K562 (cell line): ENCODE measurements at regions of chr12 and their contacts with region 1.

Region 1: DNA sequence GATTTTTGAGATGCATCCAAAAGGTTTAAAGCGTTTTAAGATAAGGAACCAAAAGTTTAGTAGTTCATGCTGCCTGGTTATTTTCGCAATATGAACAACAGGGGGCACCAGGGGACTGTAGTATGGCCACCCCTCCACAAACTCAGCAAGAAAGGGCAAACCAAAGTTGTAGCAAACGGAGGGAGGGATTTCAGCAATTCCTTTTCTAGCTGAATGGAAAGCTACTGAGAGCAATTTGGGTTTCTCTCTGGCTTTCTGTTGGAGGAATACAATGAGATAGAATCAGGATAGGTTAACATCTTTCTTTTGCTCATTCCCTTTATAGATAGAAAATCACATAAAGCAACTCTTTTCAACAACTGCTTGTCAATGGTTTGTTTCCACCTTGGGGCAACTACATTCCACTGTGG is 62.5 kb downstream of the DRAM1 start:
- DNase-seq: peak; percentile 66 to 79 (median 67)
- ATAC-seq: peak; percentile 89
- H3K4me3 ChIP-seq: no peak overlapping the region
- H3K27ac ChIP-seq: no peak overlapping the region
- H3K4me1 ChIP-seq: no peaks in the 10 kb centered on the region; a peak in 2 of 5 replicates
- H3K27me3 ChIP-seq: peaks cover 11 to 14% of the 10 kb centered on the region in 2 experiments
- CTCF ChIP-seq: peak; percentile 72 to 91 (median 76)
- EP300 ChIP-seq: no peak
- POLR2A ChIP-seq: no peak
- RAD21 ChIP-seq: peak; percentile 93 to 95

Region 2: DNA sequence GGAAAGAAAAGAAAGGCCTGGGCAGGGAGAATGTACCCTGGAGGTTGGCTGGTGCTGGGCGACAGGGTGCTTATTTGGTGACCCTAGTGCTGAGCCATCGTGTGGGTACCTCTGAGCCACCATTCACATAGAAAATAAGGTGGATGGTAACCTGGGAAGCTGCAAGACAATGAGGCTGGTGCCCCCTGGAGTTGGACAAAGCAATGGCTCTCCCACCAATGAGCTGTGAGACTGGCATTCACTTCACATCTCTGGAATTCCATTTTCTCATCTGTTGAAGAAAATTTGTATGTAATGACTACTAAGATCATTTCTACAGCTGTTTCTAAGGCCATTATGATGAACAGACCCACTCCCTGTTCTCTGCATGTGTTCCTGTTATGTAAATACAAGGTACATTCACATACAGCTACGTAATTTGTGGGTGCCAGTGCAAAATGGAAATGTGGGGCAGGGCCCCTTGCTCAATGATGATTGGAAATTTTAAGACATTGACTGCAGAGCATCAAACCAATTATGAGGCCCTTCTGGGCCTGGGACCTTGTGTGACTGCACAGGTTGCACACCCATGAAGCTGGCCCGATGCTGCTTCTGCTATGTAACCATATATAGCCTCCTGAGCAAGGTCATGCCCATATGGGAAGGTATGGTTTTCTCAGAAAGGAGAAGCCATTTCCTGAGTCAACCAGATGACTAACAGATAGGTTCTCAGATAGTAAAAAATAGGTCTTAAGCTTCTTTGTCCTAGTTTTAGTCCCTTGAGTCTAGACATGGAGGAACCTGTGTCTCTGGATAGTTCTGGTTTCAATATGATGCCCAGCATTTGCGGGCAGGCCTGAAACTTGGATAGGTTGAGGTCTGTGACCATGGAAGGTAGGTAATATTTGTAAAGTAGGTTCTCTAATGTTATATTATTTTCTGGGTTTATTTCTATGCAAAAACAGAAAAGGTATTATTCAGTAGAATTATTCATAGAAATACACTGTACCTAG is 603.9 kb after region 1 on chr12:
- CTCF ChIA-PET with region 1: no interaction called
- POLR2A ChIA-PET with region 1: no interaction called
- in situ Hi-C with region 1: no loop called
- intact Hi-C with region 1: loop called (anchors 5 kb)
- DNase-seq: peak in 1 of 4 experiments; percentile 12
- ATAC-seq: peak; percentile 71; the same call in 2 of the 3 replicates
- H3K4me3 ChIP-seq: no peak overlapping the region
- H3K27ac ChIP-seq: no peak overlapping the region
- H3K4me1 ChIP-seq: no peaks in the 10 kb centered on the region; a peak in 2 of 5 replicates
- H3K27me3 ChIP-seq: no peaks in the 10 kb centered on the region
- CTCF ChIP-seq: peak; percentile 28 to 50 (median 49); a peak in 5 of 6 replicates
- EP300 ChIP-seq: no peak
- POLR2A ChIP-seq: no peak
- RAD21 ChIP-seq: peak in 1 of 2 experiments; percentile 52; a peak in 2 of 4 replicates

Region 3: DNA sequence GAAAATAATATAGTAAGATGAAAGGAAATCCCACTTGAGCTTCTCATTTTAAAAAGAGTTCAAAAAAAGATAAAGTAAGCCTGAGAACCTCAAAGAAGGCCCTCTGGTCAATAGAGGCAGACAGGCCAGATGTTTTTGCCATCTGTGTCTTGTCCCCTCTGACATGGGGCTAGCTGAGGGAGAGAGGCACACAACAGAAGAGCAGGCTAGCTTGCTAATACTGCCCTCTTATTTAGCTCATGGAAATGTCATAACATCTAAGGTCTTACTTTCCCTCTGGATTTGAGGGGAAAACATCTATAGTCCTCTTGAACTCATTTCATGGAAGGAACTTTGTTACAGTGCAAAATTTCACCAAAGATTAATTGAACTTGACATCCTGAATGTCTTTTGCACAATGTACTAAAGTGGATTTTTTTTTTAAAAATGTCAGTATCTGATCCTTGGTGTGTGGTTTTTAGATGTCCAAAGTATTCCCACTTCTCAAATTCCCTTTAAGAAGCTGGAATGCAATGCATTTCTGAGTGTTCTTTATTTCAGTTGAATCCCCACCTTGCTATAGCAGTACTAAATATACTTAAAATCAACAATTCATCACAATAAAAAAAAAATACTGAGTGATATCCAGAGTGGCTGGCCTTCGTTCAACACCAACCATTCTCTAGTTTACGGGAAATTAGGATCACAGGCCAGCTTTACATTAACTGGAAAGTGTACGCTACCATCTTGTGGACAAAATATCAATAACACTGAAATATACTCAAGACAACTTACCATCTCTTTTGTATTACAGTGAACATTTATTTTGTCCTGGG is 800.5 kb after region 1 on chr12:
- CTCF ChIA-PET with region 1: interaction called, 10 read pairs
- POLR2A ChIA-PET with region 1: no interaction called
- in situ Hi-C with region 1: no loop called
- intact Hi-C with region 1: no loop called
- DNase-seq: peak in 1 of 4 experiments; percentile 8
- ATAC-seq: peak; percentile 49; the same call in 1 of the 3 replicates
- H3K4me3 ChIP-seq: no peak overlapping the region
- H3K27ac ChIP-seq: no peak overlapping the region
- H3K4me1 ChIP-seq: no peaks in the 10 kb centered on the region
- H3K27me3 ChIP-seq: no peaks in the 10 kb centered on the region
- CTCF ChIP-seq: peak in 1 of 3 experiments; percentile 55; a peak in 2 of 6 replicates
- EP300 ChIP-seq: no peak
- POLR2A ChIP-seq: no peak
- RAD21 ChIP-seq: peak; percentile 41 to 72

Region 4: GRCh38 chr12:102811110-102811737 is 871.4 kb after region 1 on chr12:
- CTCF ChIA-PET with region 1: no interaction called
- POLR2A ChIA-PET with region 1: no interaction called
- in situ Hi-C with region 1: no loop called
- intact Hi-C with region 1: loop called (anchors 1 kb)
- DNase-seq: peak; percentile 43 to 57 (median 45)
- ATAC-seq: peak; percentile 88
- H3K4me3 ChIP-seq: no peak overlapping the region
- H3K27ac ChIP-seq: no peak overlapping the region
- H3K4me1 ChIP-seq: no peaks in the 10 kb centered on the region
- H3K27me3 ChIP-seq: no peaks in the 10 kb centered on the region
- CTCF ChIP-seq: peak; percentile 65 to 73 (median 72)
- EP300 ChIP-seq: no peak
- POLR2A ChIP-seq: no peak
- RAD21 ChIP-seq: peak; percentile 57 to 66

Region 5: GRCh38 chr12:103548622-103549601 is 1609.1 kb after region 1 on chr12:
- CTCF ChIA-PET with region 1: no interaction called
- POLR2A ChIA-PET with region 1: no interaction called
- in situ Hi-C with region 1: no loop called
- intact Hi-C with region 1: loop called (anchors 10 kb)
- DNase-seq: peak; percentile 62 to 76 (median 70)
- ATAC-seq: peak; percentile 92
- H3K4me3 ChIP-seq: no peak overlapping the region
- H3K27ac ChIP-seq: no peak overlapping the region
- H3K4me1 ChIP-seq: no peaks in the 10 kb centered on the region
- H3K27me3 ChIP-seq: no peaks in the 10 kb centered on the region
- CTCF ChIP-seq: peak; percentile 76 to 89 (median 78)
- EP300 ChIP-seq: no peak
- POLR2A ChIP-seq: no peak
- RAD21 ChIP-seq: peak; percentile 90 to 93